Uterus (tissue), 4 donors: ENCODE measurements at regions of chr18 and their contacts with region 1.

Region 1: DNA sequence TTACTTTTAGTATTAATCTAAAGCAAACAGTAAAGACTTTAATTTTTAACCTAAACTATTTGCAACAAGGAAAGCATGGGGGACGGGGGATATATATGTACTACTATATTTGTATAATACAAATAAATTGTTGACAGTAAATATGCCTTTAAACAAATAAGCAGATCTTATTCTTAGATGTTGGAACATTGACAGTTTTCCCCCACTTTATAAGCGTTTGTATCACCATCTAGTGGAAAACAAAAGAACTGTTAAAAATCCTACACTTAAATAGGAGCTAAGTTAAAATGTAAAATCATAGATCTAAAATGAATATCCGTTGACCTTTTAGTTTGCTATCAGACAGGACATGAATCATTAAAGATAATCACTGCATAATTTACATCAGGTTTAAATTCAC is 50.0 kb downstream of the RBBP8 start:
- DNase-seq: no peak
- H3K4me3 ChIP-seq: no peak overlapping the region
- H3K27ac ChIP-seq: peak overlapping the region in 1 of 2 donors; percentile 14
- H3K4me1 ChIP-seq: no peaks in the 10 kb centered on the region
- H3K27me3 ChIP-seq: no peaks in the 10 kb centered on the region
- CTCF ChIP-seq: peak; percentile 51 to 67 (median 60)
- POLR2A ChIP-seq: no peak

Region 2: DNA sequence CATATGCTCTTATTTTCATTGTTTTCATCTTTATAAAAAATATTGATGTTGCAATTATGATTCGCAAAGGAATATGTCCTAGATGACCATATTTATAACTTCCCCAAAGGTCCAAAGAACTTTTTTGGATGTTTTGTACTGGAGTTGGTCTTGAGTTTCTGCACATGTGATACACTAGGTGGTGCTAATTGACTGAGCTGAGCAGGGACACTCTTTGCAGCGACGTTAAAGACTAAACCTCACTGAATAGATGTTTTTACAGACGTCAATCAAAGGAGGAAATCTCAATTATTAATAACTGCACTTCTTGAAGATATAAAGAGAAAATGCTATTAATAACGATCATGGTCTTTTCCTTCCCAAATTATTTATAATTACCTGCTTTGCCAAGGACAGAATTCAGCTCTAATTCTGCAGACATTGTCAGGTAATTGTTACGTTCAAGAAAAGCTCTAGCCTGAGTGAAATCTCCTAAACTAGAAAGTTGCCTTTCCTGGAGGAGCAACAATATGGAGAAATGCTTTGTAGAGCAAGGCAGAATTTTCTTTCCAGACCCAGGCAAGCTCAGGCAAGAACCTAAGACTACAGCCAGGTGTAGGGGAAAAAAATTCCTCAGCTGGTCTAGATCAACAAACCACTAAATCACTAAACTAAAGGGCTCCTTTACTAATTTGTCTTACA is 169.4 kb before region 1 on chr18:
- intact Hi-C with region 1: loop called (anchors 10 kb)
- DNase-seq: no peak
- H3K4me3 ChIP-seq: no peak overlapping the region
- H3K27ac ChIP-seq: peak overlapping the region in 1 of 2 donors; percentile 15
- H3K4me1 ChIP-seq: no peaks in the 10 kb centered on the region
- H3K27me3 ChIP-seq: no peaks in the 10 kb centered on the region
- CTCF ChIP-seq: peak; percentile 58 to 72 (median 65)
- POLR2A ChIP-seq: no peak

Region 3: GRCh38 chr18:23330423-23330822 is 347.2 kb after region 1 on chr18:
- intact Hi-C with region 1: no loop called
- DNase-seq: no peak
- H3K4me3 ChIP-seq: no peak overlapping the region
- H3K27ac ChIP-seq: no peak overlapping the region
- H3K4me1 ChIP-seq: peaks cover 0 to 5% of the 10 kb centered on the region in 2 donors
- H3K27me3 ChIP-seq: no peaks in the 10 kb centered on the region
- CTCF ChIP-seq: no peak
- POLR2A ChIP-seq: no peak